ENCODE measurements at regions of chr6 and their contacts with region 1.

Region 1: GRCh38 chr6:44246663-44247337 is at the start of gene HSP90AB1:
- H3K4me3 ChIP-seq: peak within 1 kb of the TSS; percentile 66
- H3K27ac ChIP-seq: peak within 1 kb of the TSS; percentile 71
- H3K4me1 ChIP-seq: no peaks in the 10 kb centered on the region
- CTCF ChIP-seq: peak; percentile 31; the same call in 1 of the 2 replicates

Region 2: GRCh38 chr6:44116641-44117382 is 130.0 kb before region 1 on chr6:
- CTCF ChIA-PET with region 1: no interaction called
- POLR2A ChIA-PET with region 1: interaction called, 11 read pairs
- H3K4me3 ChIP-seq: no peak overlapping the region
- H3K27ac ChIP-seq: no peak overlapping the region
- H3K4me1 ChIP-seq: peaks cover 9% of the 10 kb centered on the region
- CTCF ChIP-seq: no peak

Region 3: DNA sequence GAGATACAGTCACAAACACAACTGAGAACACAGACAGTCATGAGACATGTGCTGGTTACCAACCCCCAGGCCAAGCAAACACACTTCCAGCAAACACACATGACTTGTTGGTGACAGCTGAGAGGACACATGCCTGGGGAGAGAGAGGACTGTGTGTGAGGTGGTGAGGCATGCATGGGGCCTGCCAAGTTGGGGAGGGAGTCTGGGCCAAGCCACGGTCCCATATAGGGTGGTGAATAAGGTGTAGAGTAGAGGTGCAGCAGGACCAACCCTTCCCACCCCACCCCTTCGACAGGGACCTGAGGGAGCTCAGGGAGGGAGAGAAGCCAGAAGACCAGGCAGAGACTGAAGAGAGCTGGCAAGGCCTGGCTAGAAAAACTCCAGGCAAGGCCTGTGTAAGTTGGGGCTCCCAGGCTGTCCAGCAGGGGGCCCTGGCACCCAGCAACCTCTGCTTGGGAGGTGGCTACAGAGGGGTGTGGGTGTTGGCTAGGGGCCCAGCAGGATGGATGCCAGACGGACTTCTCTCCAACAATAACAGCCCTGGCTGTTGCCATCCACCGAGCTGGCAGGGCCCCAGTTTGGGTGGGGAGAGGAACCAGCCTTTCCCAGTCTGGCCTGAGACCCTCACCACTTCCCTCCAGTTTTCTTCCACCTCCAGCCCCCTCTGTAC is 25.4 kb before region 1 on chr6:
- CTCF ChIA-PET with region 1: interaction called, 22 read pairs
- POLR2A ChIA-PET with region 1: interaction called, 90 read pairs
- H3K4me3 ChIP-seq: no peak overlapping the region
- H3K27ac ChIP-seq: peak overlapping the region; percentile 60
- H3K4me1 ChIP-seq: peaks cover 23% of the 10 kb centered on the region
- CTCF ChIP-seq: peak; percentile 92

Region 4: DNA sequence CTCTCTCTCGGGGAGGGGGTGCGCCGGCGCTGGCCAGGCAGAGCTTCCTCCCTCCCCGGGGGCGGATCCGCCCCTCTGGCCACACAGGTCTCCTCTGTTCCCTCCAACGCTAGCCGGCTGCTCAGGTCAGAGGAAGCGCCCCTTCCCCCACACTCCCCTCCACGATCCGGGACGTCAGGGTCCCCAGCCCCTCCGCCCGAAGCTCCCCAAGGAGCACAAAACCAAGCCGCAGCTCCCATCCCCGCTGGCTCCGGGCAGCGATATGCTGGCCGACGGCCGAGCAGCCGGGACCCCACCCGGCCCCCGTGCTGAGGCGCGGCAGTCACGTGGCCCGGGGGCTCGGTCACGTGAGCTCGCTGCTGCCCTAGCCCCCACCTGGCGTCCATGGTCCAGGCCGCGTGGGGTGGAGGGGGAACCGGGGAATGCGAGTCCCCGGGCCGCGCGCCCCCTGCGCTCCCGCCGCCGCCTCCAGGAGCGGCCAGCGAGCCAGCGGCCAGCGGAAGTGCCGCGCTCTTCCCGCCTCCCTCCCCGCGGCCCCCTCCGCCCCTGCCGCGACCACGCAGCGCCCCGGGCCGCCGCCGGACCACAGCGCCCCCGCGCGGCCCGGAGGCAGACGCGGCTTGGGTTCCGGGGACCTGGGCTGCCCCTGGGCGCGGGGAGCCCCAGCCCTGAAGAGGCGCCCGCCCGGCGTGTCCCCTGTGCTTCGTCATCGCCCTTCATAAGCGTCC is 10.4 kb after region 1 on chr6 and contains the start of gene SLC35B2:
- CTCF ChIA-PET with region 1: interaction called, 36 read pairs
- POLR2A ChIA-PET with region 1: interaction called, 131 read pairs
- H3K4me3 ChIP-seq: peak within 1 kb of the TSS; percentile 82
- H3K27ac ChIP-seq: peak within 1 kb of the TSS; percentile 65; the same call in 1 of the 2 replicates
- H3K4me1 ChIP-seq: no peaks in the 10 kb centered on the region
- CTCF ChIP-seq: 0 out of 2 replicates have a peak, but pooled peaks have one; percentile 32

Region 5: GRCh38 chr6:44312901-44313788 is 66.3 kb after region 1 on chr6 and contains the start of gene AARS2:
- CTCF ChIA-PET with region 1: no interaction called
- POLR2A ChIA-PET with region 1: interaction called, 14 read pairs
- H3K4me3 ChIP-seq: peak within 1 kb of the TSS; percentile 69
- H3K27ac ChIP-seq: peak within 1 kb of the TSS; percentile 71; the same call in 1 of the 2 replicates
- H3K4me1 ChIP-seq: peaks cover 5% of the 10 kb centered on the region; the same call in 1 of the 2 replicates
- CTCF ChIP-seq: peak; percentile 98